ENCODE measurements at regions of chr21 and their contacts with region 1.

Region 1: GRCh38 chr21:38341546-38342012 is 84.8 kb downstream of the KCNJ15 start:
- DNase-seq: peak; percentile 82 to 95
- H3K4me3 ChIP-seq: no peak overlapping the region
- H3K27ac ChIP-seq: peak overlapping the region; percentile 85 to 90
- H3K4me1 ChIP-seq: peaks cover 11 to 40% of the 10 kb centered on the region in 2 donors
- H3K27me3 ChIP-seq: no peaks in the 10 kb centered on the region
- CTCF ChIP-seq: peak; percentile 34 to 65 (median 48)

Region 2: GRCh38 chr21:38140210-38140907 is 201.2 kb before region 1 on chr21:
- intact Hi-C with region 1: no loop called
- DNase-seq: no peak
- H3K4me3 ChIP-seq: no peak overlapping the region
- H3K27ac ChIP-seq: no peak overlapping the region
- H3K4me1 ChIP-seq: peaks cover 0 to 2% of the 10 kb centered on the region in 2 donors
- H3K27me3 ChIP-seq: no peaks in the 10 kb centered on the region
- CTCF ChIP-seq: no peak

Region 3: GRCh38 chr21:38241029-38241740 is 100.4 kb before region 1 on chr21:
- intact Hi-C with region 1: loop called (anchors 1 kb)
- DNase-seq: peak in 1 of 2 donors; percentile 83
- H3K4me3 ChIP-seq: peak overlapping the region in 1 of 2 donors; percentile 10
- H3K27ac ChIP-seq: peak overlapping the region; percentile 70 to 87
- H3K4me1 ChIP-seq: peaks cover 19 to 21% of the 10 kb centered on the region in 2 donors
- H3K27me3 ChIP-seq: no peaks in the 10 kb centered on the region
- CTCF ChIP-seq: no peak

Region 4: GRCh38 chr21:38303300-38303699 is 38.3 kb before region 1 on chr21:
- intact Hi-C with region 1: loop called (anchors 2 kb)
- DNase-seq: peak; percentile 65 to 94
- H3K4me3 ChIP-seq: no peak overlapping the region
- H3K27ac ChIP-seq: peak overlapping the region; percentile 52 to 69
- H3K4me1 ChIP-seq: peaks cover 0 to 12% of the 10 kb centered on the region in 2 donors
- H3K27me3 ChIP-seq: no peaks in the 10 kb centered on the region
- CTCF ChIP-seq: no peak

Region 5: GRCh38 chr21:38310619-38311018 is 31.0 kb before region 1 on chr21:
- intact Hi-C with region 1: loop called (anchors 2 kb)
- DNase-seq: no peak
- H3K4me3 ChIP-seq: no peak overlapping the region
- H3K27ac ChIP-seq: no peak overlapping the region
- H3K4me1 ChIP-seq: peaks cover 0 to 14% of the 10 kb centered on the region in 2 donors
- H3K27me3 ChIP-seq: no peaks in the 10 kb centered on the region
- CTCF ChIP-seq: no peak

Measured in ascending aorta (tissue), 2 donors.